ENCODE measurements at regions of chr1 and their contacts with region 1.

Region 1: DNA sequence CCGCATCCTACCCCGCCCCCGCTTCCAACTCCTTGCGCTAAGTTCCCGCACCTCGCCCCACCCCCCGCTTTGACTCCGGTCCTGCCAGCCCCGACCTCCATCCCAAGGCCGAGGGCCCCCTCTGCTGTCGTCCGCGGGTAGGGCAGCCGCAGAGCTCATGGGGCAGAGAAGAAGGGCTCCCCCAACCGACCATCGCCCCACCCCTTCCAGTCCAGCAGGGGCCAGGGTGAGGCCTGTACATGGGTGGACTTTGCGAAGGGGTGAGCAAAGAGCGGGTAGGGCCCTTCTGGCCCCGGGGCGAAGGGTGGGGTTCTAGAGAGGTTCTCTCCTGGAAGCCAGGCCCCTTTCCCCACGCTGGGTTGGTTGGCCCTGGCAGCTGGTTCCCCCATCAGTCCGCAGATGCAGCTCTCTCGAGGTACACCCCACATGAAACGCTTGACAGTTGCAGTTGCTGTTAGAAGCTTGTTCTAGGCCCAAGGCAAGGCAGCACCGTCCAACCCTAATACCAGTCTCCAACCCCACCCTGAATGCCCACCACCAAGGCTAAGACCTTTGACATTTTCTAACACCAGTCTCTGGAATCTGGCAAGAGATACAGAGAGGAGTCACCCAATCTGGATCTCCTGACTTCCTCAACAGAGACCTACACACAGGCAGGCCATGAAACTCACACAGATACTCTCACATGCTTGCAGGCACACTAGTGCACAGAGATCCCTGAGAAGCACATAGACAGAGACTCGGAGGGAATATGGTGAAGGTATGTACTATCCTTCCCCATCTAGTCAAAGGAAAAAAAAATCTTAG is 25.3 kb upstream of the ADGRB2 start:
- DNase-seq: peak; percentile 98
- H3K4me3 Mint-ChIP-seq: peak overlapping the region; percentile 81
- H3K27ac Mint-ChIP-seq: no peak overlapping the region
- H3K4me1 Mint-ChIP-seq: peaks cover 6% of the 10 kb centered on the region
- H3K27me3 Mint-ChIP-seq: no peaks in the 10 kb centered on the region

Region 2: GRCh38 chr1:31394628-31395193 is 394.8 kb before region 1 on chr1:
- CTCF ChIA-PET with region 1: interaction called, 5 read pairs
- intact Hi-C with region 1: loop called (anchors 2 kb)
- DNase-seq: peak; percentile 90
- H3K4me3 Mint-ChIP-seq: peak overlapping the region; percentile 72
- H3K27ac Mint-ChIP-seq: no peak overlapping the region
- H3K4me1 Mint-ChIP-seq: peaks cover 6% of the 10 kb centered on the region
- H3K27me3 Mint-ChIP-seq: no peaks in the 10 kb centered on the region

Region 3: DNA sequence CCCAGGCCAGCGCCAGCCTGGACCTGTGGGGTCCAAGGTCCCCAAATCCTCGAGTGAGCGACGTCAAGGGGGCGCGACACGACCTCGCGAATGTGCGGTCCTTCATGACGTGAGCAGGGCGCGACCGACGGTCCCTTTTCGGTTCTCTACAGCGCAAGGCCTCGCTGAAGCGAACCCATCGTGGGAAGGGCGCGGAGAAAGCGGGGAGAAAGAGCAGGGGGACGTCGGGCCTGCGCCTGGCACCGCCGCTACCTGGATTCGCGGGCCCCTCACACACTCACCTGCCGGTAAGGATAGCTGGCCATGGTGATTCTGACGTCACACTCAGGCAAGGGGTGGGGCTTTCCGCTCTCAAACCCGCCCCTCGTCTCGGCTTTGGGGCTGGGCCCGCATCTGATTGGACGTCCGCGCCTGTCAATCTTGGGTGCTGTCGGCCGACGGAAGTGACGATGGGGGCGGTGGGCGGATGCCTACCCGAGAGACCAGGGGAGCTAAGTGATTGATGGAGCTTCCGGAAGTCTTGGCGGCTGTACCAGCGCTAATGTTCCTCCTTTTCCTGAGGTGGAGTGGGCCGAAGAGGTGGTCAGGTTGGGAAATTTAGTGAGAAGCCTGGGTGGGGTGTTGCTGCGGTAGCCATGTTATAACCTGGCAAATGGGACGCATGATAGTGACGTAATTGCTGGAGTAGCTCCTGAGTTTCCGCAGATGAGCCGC is 144.7 kb before region 1 on chr1 and contains the start of gene PEF1:
- CTCF ChIA-PET with region 1: interaction called, 3 read pairs
- intact Hi-C with region 1: loop called (anchors 1 kb)
- DNase-seq: peak; percentile 100
- H3K4me3 Mint-ChIP-seq: peak within 1 kb of the TSS; percentile 97
- H3K27ac Mint-ChIP-seq: peak within 1 kb of the TSS; percentile 100
- H3K4me1 Mint-ChIP-seq: peaks cover 17% of the 10 kb centered on the region
- H3K27me3 Mint-ChIP-seq: no peaks in the 10 kb centered on the region
- total RNA-seq, gene PEF1: 79.6 to 80.6 TPM

Region 4: GRCh38 chr1:31663622-31664452 is 125.6 kb before region 1 on chr1:
- CTCF ChIA-PET with region 1: interaction called, 31 read pairs
- intact Hi-C with region 1: loop called (anchors 1 kb)
- DNase-seq: peak; percentile 63
- H3K4me3 Mint-ChIP-seq: no peak overlapping the region
- H3K27ac Mint-ChIP-seq: no peak overlapping the region
- H3K4me1 Mint-ChIP-seq: no peaks in the 10 kb centered on the region
- H3K27me3 Mint-ChIP-seq: no peaks in the 10 kb centered on the region

Region 5: GRCh38 chr1:31715087-31715872 is 74.2 kb before region 1 on chr1:
- CTCF ChIA-PET with region 1: interaction called, 29 read pairs
- intact Hi-C with region 1: loop called (anchors 1 kb)
- DNase-seq: peak; percentile 60
- H3K4me3 Mint-ChIP-seq: peak overlapping the region; percentile 42
- H3K27ac Mint-ChIP-seq: no peak overlapping the region
- H3K4me1 Mint-ChIP-seq: peaks cover 8% of the 10 kb centered on the region
- H3K27me3 Mint-ChIP-seq: peaks cover 39% of the 10 kb centered on the region

Region 6: GRCh38 chr1:31771891-31772668 is 17.4 kb before region 1 on chr1:
- CTCF ChIA-PET with region 1: interaction called, 16 read pairs
- intact Hi-C with region 1: no loop called
- DNase-seq: peak; percentile 69
- H3K4me3 Mint-ChIP-seq: peak overlapping the region; percentile 74
- H3K27ac Mint-ChIP-seq: peak overlapping the region; percentile 33
- H3K4me1 Mint-ChIP-seq: peaks cover 38% of the 10 kb centered on the region
- H3K27me3 Mint-ChIP-seq: peaks cover 25% of the 10 kb centered on the region

Region 7: DNA sequence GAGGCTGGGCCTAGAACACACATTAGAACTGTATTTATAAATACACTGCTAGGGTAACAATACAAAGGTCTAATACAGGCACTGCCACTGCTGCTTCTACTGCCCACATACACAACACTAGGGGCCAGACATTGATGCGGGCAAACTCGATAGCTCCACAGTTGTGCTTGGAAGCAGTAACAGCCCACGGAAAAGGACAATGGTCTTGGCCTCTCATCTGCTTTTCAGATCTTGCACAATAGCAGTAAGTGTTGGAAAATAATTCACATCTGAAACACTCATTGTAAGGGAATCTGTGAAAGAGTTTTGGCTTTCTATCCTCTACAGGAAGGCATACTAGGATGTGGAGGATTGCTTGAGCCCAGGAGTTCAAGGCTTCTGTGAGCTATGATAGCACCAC is 33.3 kb after region 1 on chr1:
- CTCF ChIA-PET with region 1: no interaction called
- intact Hi-C with region 1: no loop called
- DNase-seq: no peak
- H3K4me3 Mint-ChIP-seq: no peak overlapping the region
- H3K27ac Mint-ChIP-seq: no peak overlapping the region
- H3K4me1 Mint-ChIP-seq: peaks cover 14% of the 10 kb centered on the region
- H3K27me3 Mint-ChIP-seq: no peaks in the 10 kb centered on the region

Region 8: GRCh38 chr1:32568929-32569328 is 779.5 kb after region 1 on chr1:
- CTCF ChIA-PET with region 1: no interaction called
- intact Hi-C with region 1: no loop called
- DNase-seq: no peak
- H3K4me3 Mint-ChIP-seq: no peak overlapping the region
- H3K27ac Mint-ChIP-seq: no peak overlapping the region
- H3K4me1 Mint-ChIP-seq: no peaks in the 10 kb centered on the region
- H3K27me3 Mint-ChIP-seq: peaks cover 2% of the 10 kb centered on the region

Measured in activated naive CD4-positive, alpha-beta T cell treated with anti-CD3 and anti-CD28 coated beads for 36 hours (primary cell).